ENCODE measurements at regions of chr14 and their contacts with region 1.

Region 1: GRCh38 chr14:24398653-24399446 is at the start of gene NYNRIN:
- DNase-seq: no peak
- ATAC-seq: peak; percentile 78
- H3K4me3 ChIP-seq: peak within 1 kb of the TSS; percentile 54 to 74 (median 62)
- H3K27ac ChIP-seq: no peak within 1 kb of the TSS
- H3K4me1 ChIP-seq: peaks cover 43% of the 10 kb centered on the region
- H3K27me3 ChIP-seq: peaks cover 15 to 58% of the 10 kb centered on the region in 2 experiments
- CTCF ChIP-seq: 0 out of 2 replicates have a peak, but pooled peaks have one; percentile 5
- EP300 ChIP-seq: no peak
- POLR2A ChIP-seq: no peak
- RAD21 ChIP-seq: no peak
- total RNA-seq, gene NYNRIN: 1.1 and 1.3 TPM in 2 replicates

Region 2: DNA sequence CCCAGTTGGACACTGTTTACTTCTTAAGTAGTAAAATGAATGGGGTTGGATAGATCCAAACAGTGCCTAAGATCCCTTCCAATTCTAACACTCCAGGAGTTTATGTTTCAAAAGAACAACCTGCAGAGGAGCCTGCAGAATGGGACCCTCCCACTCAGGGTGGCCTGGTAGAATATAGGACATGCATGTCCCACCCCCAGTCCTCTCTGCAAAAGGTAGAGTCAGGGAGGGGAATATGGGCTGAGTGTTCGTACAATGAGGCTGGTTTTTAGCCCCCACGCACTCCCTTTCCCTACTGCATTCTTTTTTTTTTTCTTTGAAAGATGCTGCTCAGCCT is 11.9 kb before region 1 on chr14:
- CTCF ChIA-PET with region 1: no interaction called
- POLR2A ChIA-PET with region 1: interaction called, 3 read pairs
- in situ Hi-C with region 1: no loop called
- intact Hi-C with region 1: loop called (anchors 2 kb)
- DNase-seq: no peak
- ATAC-seq: peak; percentile 58
- H3K4me3 ChIP-seq: no peak overlapping the region
- H3K27ac ChIP-seq: no peak overlapping the region
- H3K4me1 ChIP-seq: peaks cover 33% of the 10 kb centered on the region
- H3K27me3 ChIP-seq: peaks cover 7 to 25% of the 10 kb centered on the region in 2 experiments; a peak in 4 of 5 replicates
- CTCF ChIP-seq: no peak
- EP300 ChIP-seq: no peak
- POLR2A ChIP-seq: no peak
- RAD21 ChIP-seq: no peak

Region 3: DNA sequence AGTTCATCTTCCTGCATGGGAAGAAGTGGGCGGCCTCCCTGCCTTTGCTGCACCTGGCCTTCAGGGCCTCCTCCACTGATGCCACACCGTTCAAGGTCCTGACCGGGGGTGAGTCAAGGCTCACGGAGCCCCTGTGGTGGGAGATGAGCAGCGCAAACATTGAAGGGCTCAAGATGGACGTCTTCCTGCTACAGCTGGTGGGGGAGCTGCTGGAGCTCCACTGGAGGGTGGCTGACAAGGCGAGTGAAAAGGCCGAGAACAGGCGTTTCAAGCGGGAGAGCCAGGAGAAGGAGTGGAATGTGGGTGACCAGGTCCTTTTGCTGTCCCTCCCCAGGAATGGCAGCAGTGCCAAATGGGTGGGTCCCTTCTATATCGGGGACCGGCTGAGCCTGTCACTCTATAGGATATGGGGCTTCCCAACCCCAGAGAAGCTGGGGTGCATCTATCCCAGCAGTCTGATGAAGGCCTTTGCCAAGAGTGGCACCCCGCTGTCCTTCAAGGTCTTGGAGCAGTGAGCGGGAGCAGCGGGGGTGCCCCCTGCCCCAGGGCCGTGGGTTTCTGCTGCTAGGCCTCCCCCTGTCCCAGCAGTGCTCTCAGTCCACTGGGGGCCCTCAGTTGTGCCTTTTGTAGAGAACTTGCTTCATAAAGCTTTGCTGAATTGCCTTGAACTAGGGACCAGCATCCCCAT is 18.2 kb after region 1 on chr14:
- CTCF ChIA-PET with region 1: no interaction called
- POLR2A ChIA-PET with region 1: no interaction called
- in situ Hi-C with region 1: no loop called
- intact Hi-C with region 1: no loop called
- DNase-seq: no peak
- ATAC-seq: no peak; the same call in 2 of the 3 replicates
- H3K4me3 ChIP-seq: no peak overlapping the region
- H3K27ac ChIP-seq: no peak overlapping the region
- H3K4me1 ChIP-seq: no peaks in the 10 kb centered on the region
- H3K27me3 ChIP-seq: peaks cover 0 to 7% of the 10 kb centered on the region in 2 experiments; a peak in 1 of 5 replicates
- CTCF ChIP-seq: no peak
- EP300 ChIP-seq: no peak
- POLR2A ChIP-seq: no peak
- RAD21 ChIP-seq: no peak

Region 4: GRCh38 chr14:24513009-24513408 is 114.2 kb after region 1 on chr14:
- CTCF ChIA-PET with region 1: no interaction called
- POLR2A ChIA-PET with region 1: no interaction called
- in situ Hi-C with region 1: no loop called
- intact Hi-C with region 1: no loop called
- DNase-seq: no peak
- ATAC-seq: peak; percentile 41; the same call in 1 of the 3 replicates
- H3K4me3 ChIP-seq: no peak overlapping the region
- H3K27ac ChIP-seq: no peak overlapping the region
- H3K4me1 ChIP-seq: no peaks in the 10 kb centered on the region
- H3K27me3 ChIP-seq: no peaks in the 10 kb centered on the region
- CTCF ChIP-seq: no peak
- EP300 ChIP-seq: no peak
- POLR2A ChIP-seq: no peak
- RAD21 ChIP-seq: no peak

Measured in HepG2 (cell line).